Activated CD8-positive, alpha-beta T cell treated with anti-CD3 and anti-CD28 coated beads for 36 hours (primary cell): ENCODE measurements at regions of chr1 and their contacts with region 1.

Region 1: GRCh38 chr1:112466078-112466660 is 42.6 kb upstream of the WNT2B start:
- DNase-seq: peak; percentile 92
- ATAC-seq: peak; percentile 98
- H3K4me3 Mint-ChIP-seq: peak overlapping the region; percentile 71
- H3K27ac Mint-ChIP-seq: peak overlapping the region; percentile 32
- H3K4me1 Mint-ChIP-seq: peaks cover 9% of the 10 kb centered on the region
- H3K27me3 Mint-ChIP-seq: peaks cover 35% of the 10 kb centered on the region
- CTCF ChIP-seq: peak; percentile 86

Region 2: GRCh38 chr1:112445596-112445995 is 20.6 kb before region 1 on chr1:
- CTCF ChIA-PET with region 1: interaction called, 10 read pairs
- POLR2A ChIA-PET with region 1: interaction called, 4 read pairs
- intact Hi-C with region 1: no loop called
- DNase-seq: no peak
- ATAC-seq: no peak
- H3K4me3 Mint-ChIP-seq: no peak overlapping the region
- H3K27ac Mint-ChIP-seq: no peak overlapping the region
- H3K4me1 Mint-ChIP-seq: no peaks in the 10 kb centered on the region
- H3K27me3 Mint-ChIP-seq: no peaks in the 10 kb centered on the region
- CTCF ChIP-seq: no peak